GM10248 (cell line): ENCODE measurements at regions of chr3 and their contacts with region 1.

Region 1: GRCh38 chr3:127574880-127575878 is 15.4 kb downstream of the TPRA1 start:
- DNase-seq: peak; percentile 95
- CTCF ChIP-seq: peak; percentile 98

Region 2: DNA sequence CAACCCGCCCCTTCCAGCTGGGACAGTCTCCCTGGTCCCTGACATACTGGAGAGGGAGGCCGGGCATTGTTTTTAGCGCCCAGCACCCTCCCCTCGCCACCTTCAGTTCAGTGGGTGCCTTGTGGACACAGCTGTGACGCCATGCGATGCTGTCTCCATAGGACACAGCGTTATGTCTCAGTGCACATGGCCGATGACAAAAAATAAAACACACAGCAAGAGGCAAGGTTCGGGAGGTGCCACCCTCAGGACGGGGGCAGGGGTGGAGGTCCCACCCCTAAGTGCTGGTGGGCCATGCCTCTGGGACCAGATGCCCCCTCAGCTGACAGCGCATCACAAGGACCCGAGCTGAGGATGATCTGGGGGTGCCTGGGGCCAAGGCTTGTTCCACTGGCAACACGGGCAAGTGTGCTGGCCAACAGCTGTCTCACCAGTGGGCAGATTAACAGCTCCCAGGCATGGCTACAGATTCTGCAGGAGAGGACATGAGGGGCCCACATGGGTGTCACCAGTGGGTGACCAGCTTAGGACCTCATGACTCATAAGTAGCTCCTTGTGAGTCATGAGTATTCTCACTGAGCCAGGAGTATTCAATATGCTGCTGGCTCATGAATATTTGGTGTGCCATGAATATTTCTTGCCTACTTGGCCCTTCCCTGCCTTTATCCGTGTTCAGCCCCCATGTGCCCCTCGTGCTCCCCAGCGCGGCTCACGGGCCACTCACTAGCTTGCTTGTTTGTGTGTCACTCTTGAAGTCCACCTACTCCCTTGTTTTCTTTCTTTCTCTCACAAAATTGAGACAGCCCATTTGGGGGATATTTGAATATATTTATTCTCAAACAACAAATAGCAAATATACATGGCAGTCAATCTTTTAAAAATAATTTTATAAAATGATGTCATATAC is 510.4 kb before region 1 on chr3:
- CTCF ChIA-PET with region 1: no interaction called
- POLR2A ChIA-PET with region 1: no interaction called
- DNase-seq: no peak
- CTCF ChIP-seq: no peak

Region 3: DNA sequence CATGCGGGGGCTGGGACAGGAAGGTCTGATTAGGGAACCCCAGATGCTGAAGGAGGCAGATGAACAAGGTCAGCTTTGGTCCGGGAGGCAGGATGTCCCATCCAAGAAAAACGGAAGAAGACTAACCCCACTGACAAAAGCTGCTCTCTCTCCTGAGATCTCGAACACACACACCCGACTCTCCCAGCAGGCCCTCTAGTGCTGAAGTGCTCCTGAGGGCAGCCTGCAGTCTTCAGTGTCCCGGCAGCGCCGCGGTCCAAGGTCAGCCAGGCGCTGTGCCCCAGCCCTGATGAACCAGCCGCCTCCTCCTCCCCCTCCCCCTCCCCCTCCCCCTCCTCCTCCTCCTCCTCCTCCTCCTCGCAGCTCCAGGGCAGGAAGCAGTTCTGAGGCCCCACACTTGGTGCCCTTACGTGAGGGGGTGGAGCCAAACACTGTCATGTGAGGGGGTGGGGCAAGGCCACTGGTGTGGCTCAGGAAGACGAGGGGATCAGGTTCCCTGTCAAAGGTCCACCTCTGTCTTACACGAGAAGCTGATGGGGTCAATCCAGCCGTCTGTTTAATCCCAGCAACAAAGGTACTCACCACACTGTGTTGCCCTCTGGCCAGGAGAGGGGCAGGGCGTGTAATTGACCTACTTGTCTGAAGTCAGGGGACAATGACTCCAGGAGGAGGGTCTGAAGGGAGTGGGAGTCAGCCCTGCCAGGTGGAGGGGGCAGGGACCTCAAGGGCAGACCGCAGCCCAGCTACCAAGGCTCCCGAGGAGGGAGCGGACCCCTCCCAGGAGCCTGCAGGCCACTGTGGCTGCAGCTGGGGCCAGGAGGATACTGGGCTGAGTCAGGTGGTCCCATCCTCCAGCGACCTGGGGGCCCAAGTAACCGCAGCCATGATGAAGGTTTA is 348.0 kb before region 1 on chr3:
- CTCF ChIA-PET with region 1: no interaction called
- POLR2A ChIA-PET with region 1: no interaction called
- DNase-seq: no peak
- CTCF ChIP-seq: no peak

Region 4: DNA sequence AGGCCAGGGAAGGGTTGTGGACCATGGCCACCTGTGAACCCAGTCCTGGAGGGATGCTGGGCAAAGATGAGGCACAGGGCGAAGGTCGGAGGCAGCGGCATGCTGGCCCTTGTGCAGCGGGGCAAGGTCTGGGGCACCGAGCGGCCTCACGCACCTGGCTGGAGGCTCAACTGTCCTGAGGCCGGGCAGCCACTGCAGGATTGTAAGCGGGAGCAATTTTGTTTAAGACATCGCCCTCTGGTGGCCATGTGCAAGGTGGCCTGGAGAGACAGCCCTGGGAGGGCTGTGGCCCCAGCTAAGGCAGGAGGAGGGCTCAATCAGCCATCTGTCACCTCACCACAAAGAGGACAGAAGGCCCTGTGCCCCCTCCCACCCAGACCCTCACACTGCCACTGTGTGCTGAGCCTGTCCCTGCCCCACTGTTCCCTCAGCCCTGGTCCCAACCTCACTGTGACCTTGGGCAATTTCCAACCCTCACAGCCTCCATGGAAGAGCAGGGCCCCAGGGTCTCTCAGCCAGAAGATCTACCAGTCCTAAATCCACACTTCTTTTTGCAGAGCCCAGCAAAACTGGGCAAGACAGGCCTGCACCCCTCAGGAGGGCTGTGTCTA is 30.9 kb before region 1 on chr3:
- CTCF ChIA-PET with region 1: interaction called, 11 read pairs
- POLR2A ChIA-PET with region 1: no interaction called
- DNase-seq: peak; percentile 90
- CTCF ChIP-seq: peak; percentile 88

Region 5: DNA sequence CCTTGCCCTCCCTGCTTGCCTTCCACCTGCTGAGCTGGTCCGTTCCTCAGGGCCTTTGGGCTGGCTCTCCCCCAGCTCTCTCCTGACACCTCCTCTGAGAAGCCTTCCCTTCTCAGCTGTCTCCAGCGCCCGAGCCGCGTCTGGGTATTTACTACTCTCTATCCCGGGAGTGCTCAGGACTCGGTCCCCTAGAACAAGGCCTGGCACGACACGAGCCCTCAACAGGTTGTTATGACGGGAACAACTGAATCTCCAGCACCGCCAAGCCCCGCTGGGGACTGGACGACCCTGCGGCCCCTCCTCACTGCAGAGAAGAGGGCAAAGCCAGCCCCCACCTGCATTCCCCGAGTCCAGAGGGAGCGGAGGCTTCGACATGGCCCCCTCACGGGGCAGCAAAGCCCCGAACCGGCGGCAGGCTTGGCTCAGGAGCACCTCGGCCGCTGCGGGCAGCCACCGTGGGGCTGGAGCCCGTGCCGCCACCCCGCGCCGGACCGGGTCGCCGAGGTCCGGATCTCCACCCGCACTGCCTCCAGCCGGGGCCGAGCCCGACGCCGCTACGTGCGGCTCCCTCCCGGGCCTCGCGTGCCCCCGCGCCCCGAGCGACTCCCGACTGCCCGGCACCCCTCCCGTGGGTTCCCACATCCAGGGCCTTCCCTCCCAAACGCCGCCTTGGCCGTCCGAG is 14.6 kb after region 1 on chr3:
- CTCF ChIA-PET with region 1: interaction called, 98 read pairs
- POLR2A ChIA-PET with region 1: no interaction called
- DNase-seq: no peak
- CTCF ChIP-seq: no peak

Region 6: GRCh38 chr3:127598841-127599570 is 23.8 kb after region 1 on chr3:
- CTCF ChIA-PET with region 1: interaction called, 29 read pairs
- POLR2A ChIA-PET with region 1: interaction called, 3 read pairs
- DNase-seq: no peak
- CTCF ChIP-seq: no peak

Region 7: DNA sequence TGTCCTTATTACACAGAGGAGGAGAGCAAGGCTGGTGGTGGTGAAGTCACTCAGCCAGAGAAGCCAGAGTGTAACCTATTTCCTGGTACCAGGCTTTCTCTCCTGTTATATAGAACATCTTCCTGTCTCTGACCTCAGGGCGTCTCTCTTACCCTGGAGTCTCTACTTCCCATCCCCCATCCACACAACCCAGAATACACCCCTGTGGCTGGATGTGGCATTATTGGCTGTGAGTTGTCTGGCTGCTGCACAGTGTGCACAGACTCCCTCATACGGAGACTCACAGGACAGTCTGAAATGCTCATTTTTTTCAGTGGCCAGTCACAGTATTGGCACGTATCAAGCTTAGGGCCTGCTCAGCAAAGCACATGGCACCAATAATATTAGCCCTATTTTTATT is 62.4 kb after region 1 on chr3:
- CTCF ChIA-PET with region 1: interaction called, 12 read pairs
- POLR2A ChIA-PET with region 1: no interaction called
- DNase-seq: no peak
- CTCF ChIP-seq: no peak

Region 8: GRCh38 chr3:127959846-127960245 is 384.7 kb after region 1 on chr3:
- CTCF ChIA-PET with region 1: interaction called, 11 read pairs
- POLR2A ChIA-PET with region 1: no interaction called
- DNase-seq: peak; percentile 39
- CTCF ChIP-seq: peak; percentile 50

Region 9: GRCh38 chr3:127970966-127971592 is 395.9 kb after region 1 on chr3:
- CTCF ChIA-PET with region 1: interaction called, 34 read pairs
- POLR2A ChIA-PET with region 1: no interaction called
- DNase-seq: peak; percentile 56
- CTCF ChIP-seq: peak; percentile 74